ENCODE measurements at regions of chr11 and their contacts with region 1.

Region 1: GRCh38 chr11:75204685-75205563 is 35.6 kb upstream of the TPBGL start:
- DNase-seq: peak; percentile 61 to 75 (median 68)
- H3K4me3 ChIP-seq: no peak overlapping the region
- H3K4me3 Mint-ChIP-seq: no peak overlapping the region
- H3K27ac ChIP-seq: no peak overlapping the region
- H3K27ac Mint-ChIP-seq: no peak overlapping the region
- H3K4me1 ChIP-seq: no peaks in the 10 kb centered on the region
- H3K4me1 Mint-ChIP-seq: no peaks in the 10 kb centered on the region
- H3K27me3 ChIP-seq: no peaks in the 10 kb centered on the region
- H3K27me3 Mint-ChIP-seq: peaks cover 3 to 7% of the 10 kb centered on the region in 2 donors

Region 2: DNA sequence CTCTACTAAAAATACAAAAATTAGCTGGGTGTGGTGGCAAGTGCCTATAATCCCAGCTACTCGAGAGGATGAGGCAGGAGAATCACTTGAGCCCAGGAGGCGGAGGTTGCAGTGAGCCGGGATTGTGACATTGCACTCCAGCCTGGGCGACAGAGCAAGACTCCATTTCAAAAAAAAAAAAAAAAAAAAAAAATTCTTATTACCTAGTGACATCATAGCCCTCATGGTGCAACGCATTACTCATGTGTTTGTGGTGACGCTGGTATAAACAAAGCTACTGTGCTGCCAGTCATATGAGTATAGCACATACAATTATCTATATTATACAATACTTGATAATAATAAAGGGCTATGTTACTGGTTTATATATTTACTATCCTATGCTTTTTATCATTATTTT is 149.5 kb before region 1 on chr11:
- CTCF ChIA-PET with region 1: no interaction called
- POLR2A ChIA-PET with region 1: no interaction called
- intact Hi-C with region 1: no loop called
- DNase-seq: no peak
- H3K4me3 ChIP-seq: no peak overlapping the region
- H3K4me3 Mint-ChIP-seq: no peak overlapping the region
- H3K27ac ChIP-seq: no peak overlapping the region
- H3K27ac Mint-ChIP-seq: no peak overlapping the region
- H3K4me1 ChIP-seq: no peaks in the 10 kb centered on the region
- H3K4me1 Mint-ChIP-seq: no peaks in the 10 kb centered on the region
- H3K27me3 ChIP-seq: no peaks in the 10 kb centered on the region
- H3K27me3 Mint-ChIP-seq: peaks cover 16 to 19% of the 10 kb centered on the region in 2 donors

Region 3: DNA sequence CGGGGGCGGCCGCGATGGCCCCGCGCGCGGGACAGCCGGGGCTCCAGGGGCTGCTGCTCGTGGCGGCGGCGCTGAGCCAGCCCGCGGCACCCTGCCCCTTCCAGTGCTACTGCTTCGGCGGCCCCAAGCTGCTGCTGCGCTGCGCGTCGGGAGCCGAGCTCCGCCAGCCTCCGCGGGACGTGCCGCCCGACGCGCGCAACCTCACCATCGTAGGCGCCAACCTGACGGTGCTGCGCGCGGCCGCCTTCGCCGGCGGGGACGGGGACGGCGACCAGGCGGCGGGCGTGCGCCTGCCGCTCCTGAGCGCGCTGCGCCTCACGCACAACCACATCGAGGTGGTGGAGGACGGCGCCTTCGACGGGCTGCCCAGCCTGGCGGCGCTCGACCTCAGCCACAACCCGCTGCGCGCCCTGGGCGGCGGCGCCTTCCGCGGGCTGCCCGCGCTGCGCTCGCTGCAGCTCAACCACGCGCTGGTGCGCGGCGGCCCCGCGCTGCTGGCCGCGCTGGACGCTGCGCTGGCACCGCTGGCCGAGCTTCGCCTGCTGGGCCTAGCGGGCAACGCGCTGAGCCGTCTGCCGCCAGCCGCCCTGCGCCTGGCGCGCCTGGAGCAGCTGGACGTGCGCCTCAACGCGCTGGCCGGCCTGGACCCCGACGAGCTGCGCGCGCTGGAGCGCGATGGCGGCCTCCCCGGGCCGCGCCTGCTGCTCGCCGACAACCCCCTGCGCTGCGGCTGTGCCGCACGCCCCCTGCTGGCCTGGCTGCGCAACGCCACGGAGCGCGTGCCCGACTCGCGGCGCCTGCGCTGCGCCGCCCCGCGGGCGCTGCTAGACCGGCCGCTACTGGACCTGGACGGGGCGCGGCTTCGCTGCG is 36.3 kb after region 1 on chr11:
- CTCF ChIA-PET with region 1: interaction called, 10 read pairs
- POLR2A ChIA-PET with region 1: no interaction called
- intact Hi-C with region 1: no loop called
- DNase-seq: peak; percentile 76 to 90 (median 86)
- H3K4me3 ChIP-seq: peak overlapping the region in 1 of 2 donors; percentile 47
- H3K4me3 Mint-ChIP-seq: peak overlapping the region in 7 of 8 donors; percentile 67 to 82 (median 73)
- H3K27ac ChIP-seq: no peak overlapping the region
- H3K27ac Mint-ChIP-seq: peak overlapping the region in 1 of 7 donors; percentile 87
- H3K4me1 ChIP-seq: peaks cover 14% of the 10 kb centered on the region
- H3K4me1 Mint-ChIP-seq: peaks cover 1 to 16% (median 5%) of the 10 kb centered on the region in 4 donors
- H3K27me3 ChIP-seq: peaks cover 16% of the 10 kb centered on the region
- H3K27me3 Mint-ChIP-seq: peaks cover 24 to 27% of the 10 kb centered on the region in 2 donors

Region 4: GRCh38 chr11:75248690-75249268 is 43.9 kb after region 1 on chr11:
- CTCF ChIA-PET with region 1: interaction called, 31 read pairs
- POLR2A ChIA-PET with region 1: no interaction called
- intact Hi-C with region 1: loop called (anchors 2 kb)
- DNase-seq: peak; percentile 81 to 87 (median 84)
- H3K4me3 ChIP-seq: no peak overlapping the region
- H3K4me3 Mint-ChIP-seq: no peak overlapping the region
- H3K27ac ChIP-seq: no peak overlapping the region
- H3K27ac Mint-ChIP-seq: peak overlapping the region in 1 of 7 donors; percentile 47
- H3K4me1 ChIP-seq: no peaks in the 10 kb centered on the region
- H3K4me1 Mint-ChIP-seq: peaks cover 0 to 3% (median 1%) of the 10 kb centered on the region in 4 donors
- H3K27me3 ChIP-seq: no peaks in the 10 kb centered on the region
- H3K27me3 Mint-ChIP-seq: peaks cover 10 to 14% of the 10 kb centered on the region in 2 donors

Region 5: DNA sequence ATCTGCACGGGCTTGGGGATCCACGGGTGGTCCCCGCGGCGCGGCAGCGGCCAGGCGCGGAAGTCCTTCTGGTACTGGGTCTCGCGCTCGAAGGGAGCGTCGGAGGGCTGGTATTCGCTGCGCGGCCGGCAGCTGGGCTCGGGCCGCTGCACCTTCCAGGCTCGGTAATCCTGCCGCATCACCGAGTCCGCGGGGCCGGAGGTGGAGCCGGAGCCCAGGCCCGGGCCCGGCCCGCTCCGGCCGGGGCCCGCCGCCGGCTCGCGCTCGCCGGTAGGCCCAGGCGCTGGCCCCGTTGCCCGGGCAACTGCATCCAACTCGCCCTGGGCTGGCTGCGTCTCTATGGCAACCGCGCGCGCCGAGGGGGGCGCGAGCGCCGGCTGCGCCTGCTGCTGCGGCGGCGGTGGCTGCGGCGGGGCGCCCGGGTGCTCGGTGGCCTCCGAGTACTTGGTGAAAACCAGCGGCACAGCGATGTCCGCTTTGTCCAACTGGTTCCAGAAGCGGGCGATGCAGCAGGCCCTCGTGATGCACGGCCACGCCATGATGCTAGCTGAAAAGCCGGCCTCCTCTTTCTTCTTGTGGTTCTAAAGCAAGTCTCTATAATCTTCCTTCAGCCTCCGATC is 463.0 kb after region 1 on chr11:
- CTCF ChIA-PET with region 1: no interaction called
- POLR2A ChIA-PET with region 1: no interaction called
- intact Hi-C with region 1: no loop called
- DNase-seq: peak in 3 of 5 donors; percentile 7 to 18 (median 8)
- H3K4me3 ChIP-seq: peak overlapping the region in 1 of 2 donors; percentile 49
- H3K4me3 Mint-ChIP-seq: peak overlapping the region; percentile 84 to 95 (median 88)
- H3K27ac ChIP-seq: no peak overlapping the region
- H3K27ac Mint-ChIP-seq: peak overlapping the region in 1 of 7 donors; percentile 59
- H3K4me1 ChIP-seq: peaks cover 14% of the 10 kb centered on the region
- H3K4me1 Mint-ChIP-seq: peaks cover 7 to 23% (median 13%) of the 10 kb centered on the region in 4 donors
- H3K27me3 ChIP-seq: peaks cover 33% of the 10 kb centered on the region
- H3K27me3 Mint-ChIP-seq: peaks cover 48 to 61% of the 10 kb centered on the region in 2 donors